ENCODE measurements at regions of chr19 and their contacts with region 1.

Region 1: GRCh38 chr19:4524808-4525562 is 6.7 kb upstream of the PLIN4 start:
- DNase-seq: no peak
- H3K4me3 ChIP-seq: no peak overlapping the region
- CTCF ChIP-seq: peak; percentile 83

Region 2: GRCh38 chr19:4510435-4511194 is 14.4 kb before region 1 on chr19:
- CTCF ChIA-PET with region 1: interaction called, 19 read pairs
- POLR2A ChIA-PET with region 1: no interaction called
- DNase-seq: no peak
- H3K4me3 ChIP-seq: no peak overlapping the region
- CTCF ChIP-seq: no peak

Region 3: GRCh38 chr19:4534836-4535658 is 10.1 kb after region 1 on chr19 and contains the start of gene PLIN5:
- CTCF ChIA-PET with region 1: interaction called, 84 read pairs
- POLR2A ChIA-PET with region 1: interaction called, 4 read pairs
- DNase-seq: no peak
- H3K4me3 ChIP-seq: no peak within 1 kb of the TSS
- CTCF ChIP-seq: no peak

Region 4: DNA sequence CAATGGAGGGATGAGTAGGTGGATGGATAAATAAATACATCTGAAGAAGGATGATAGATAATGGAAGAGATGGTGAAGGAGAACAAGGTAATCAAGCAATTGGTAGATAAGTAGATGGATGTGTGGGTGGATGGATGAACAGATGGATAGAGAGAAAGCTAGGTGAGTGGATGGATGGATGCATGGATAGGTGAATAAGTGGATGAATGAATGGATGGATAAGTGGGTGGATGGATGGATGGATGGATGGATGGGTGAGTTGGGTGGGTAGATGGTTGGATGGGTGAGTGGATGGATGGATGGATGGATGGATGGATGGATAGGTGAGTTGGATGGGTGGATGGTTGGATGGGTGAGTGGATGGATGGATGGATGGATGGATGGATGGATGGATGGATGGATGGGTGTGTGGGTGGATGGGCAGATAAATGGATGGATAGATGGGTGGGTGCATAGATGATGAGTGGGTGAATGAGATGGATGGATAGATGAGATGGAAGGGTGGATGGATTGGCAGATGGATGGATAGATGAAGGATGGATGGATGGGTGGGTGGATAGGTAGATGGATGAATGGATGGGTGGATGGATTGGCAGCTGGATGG is 28.2 kb after region 1 on chr19:
- CTCF ChIA-PET with region 1: no interaction called
- POLR2A ChIA-PET with region 1: no interaction called
- DNase-seq: no peak
- H3K4me3 ChIP-seq: no peak overlapping the region
- CTCF ChIP-seq: no peak